H1 (cell line): ENCODE measurements at regions of chr5 and their contacts with region 1.

Region 1: GRCh38 chr5:16427587-16427986 is 38.0 kb downstream of the ZNF622 start:
- DNase-seq: no peak
- H3K4me3 ChIP-seq: no peak overlapping the region
- H3K27ac ChIP-seq: no peak overlapping the region
- H3K4me1 ChIP-seq: peaks cover 2 to 16% (median 5%) of the 10 kb centered on the region in 4 experiments; a peak in 6 of 7 replicates
- H3K27me3 ChIP-seq: no peaks in the 10 kb centered on the region
- CTCF ChIP-seq: no peak
- EP300 ChIP-seq: no peak
- POLR2A ChIP-seq: no peak
- RAD21 ChIP-seq: no peak

Region 2: GRCh38 chr5:16234598-16234997 is 193.0 kb before region 1 on chr5:
- CTCF ChIA-PET with region 1: no interaction called
- POLR2A ChIA-PET with region 1: no interaction called
- DNase-seq: no peak
- H3K4me3 ChIP-seq: no peak overlapping the region
- H3K27ac ChIP-seq: no peak overlapping the region
- H3K4me1 ChIP-seq: no peaks in the 10 kb centered on the region
- H3K27me3 ChIP-seq: no peaks in the 10 kb centered on the region
- CTCF ChIP-seq: no peak
- EP300 ChIP-seq: no peak
- POLR2A ChIP-seq: no peak
- RAD21 ChIP-seq: no peak

Region 3: GRCh38 chr5:16437974-16438373 is 10.4 kb after region 1 on chr5:
- CTCF ChIA-PET with region 1: interaction called, 17 read pairs
- POLR2A ChIA-PET with region 1: interaction called, 3 read pairs
- DNase-seq: no peak
- H3K4me3 ChIP-seq: no peak overlapping the region
- H3K27ac ChIP-seq: no peak overlapping the region
- H3K4me1 ChIP-seq: no peaks in the 10 kb centered on the region
- H3K27me3 ChIP-seq: no peaks in the 10 kb centered on the region
- CTCF ChIP-seq: no peak; a peak in 1 of 4 replicates
- EP300 ChIP-seq: no peak
- POLR2A ChIP-seq: no peak
- RAD21 ChIP-seq: peak in 1 of 2 experiments; percentile 11; a peak in 1 of 4 replicates